ENCODE measurements at regions of chrX and their contacts with region 1.

Region 1: GRCh38 chrX:30504309-30504708 is 73.3 kb downstream of the TASL start:
- DNase-seq: peak in 2 of 4 donors; percentile 18 to 30
- ATAC-seq: no peak
- H3K4me3 ChIP-seq: no peak overlapping the region
- H3K27ac ChIP-seq: no peak overlapping the region
- H3K4me1 ChIP-seq: no peaks in the 10 kb centered on the region
- H3K27me3 ChIP-seq: peaks cover 0 to 5% of the 10 kb centered on the region in 2 donors
- CTCF ChIP-seq: peak in 1 of 2 donors; percentile 43

Region 2: DNA sequence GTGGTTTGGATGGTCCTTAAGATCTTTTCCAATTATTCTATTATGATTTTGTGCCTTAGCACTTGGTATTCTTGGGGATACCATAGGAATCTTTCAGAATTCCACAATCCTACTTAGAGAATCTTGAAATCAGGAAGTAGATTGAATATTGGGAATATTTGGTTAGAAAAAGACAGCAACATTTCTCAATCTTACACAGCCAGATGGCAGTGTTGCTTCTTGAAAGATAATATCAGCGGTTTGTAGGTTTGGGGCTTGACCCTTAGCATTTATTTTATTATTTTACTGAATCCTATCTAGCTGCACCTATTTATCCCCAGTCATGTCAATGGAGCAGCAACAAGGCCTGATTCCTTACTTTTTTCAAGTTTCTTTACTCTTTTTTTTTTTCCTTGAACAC is 228.8 kb before region 1 on chrX:
- intact Hi-C with region 1: loop called in 1 of 2 experiments (anchors 10 kb)
- DNase-seq: no peak
- ATAC-seq: no peak
- H3K4me3 ChIP-seq: no peak overlapping the region
- H3K27ac ChIP-seq: no peak overlapping the region
- H3K4me1 ChIP-seq: no peaks in the 10 kb centered on the region
- H3K27me3 ChIP-seq: no peaks in the 10 kb centered on the region
- CTCF ChIP-seq: no peak

Measured in left lung (tissue), 14 donors.